K562 (cell line): ENCODE measurements at regions of chr11 and their contacts with region 1.

Region 1: DNA sequence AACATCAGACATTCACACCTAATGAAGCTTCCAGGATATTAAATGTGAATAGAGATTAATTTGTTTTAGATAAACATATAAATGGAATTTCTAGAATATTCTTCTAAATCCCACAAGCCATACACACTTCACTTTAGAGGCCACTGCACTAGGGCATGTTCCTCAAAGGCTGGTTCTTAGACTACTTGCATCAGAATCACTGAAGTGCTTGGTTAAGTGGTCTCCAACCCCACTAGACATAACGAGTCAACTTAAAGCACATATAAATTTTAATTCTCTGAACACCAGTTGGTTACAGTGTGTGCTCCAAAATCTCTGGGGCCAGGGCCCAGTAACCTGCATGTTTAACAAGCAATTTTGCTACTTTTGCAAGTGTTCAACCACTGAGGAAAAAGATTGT is 7.9 kb upstream of the ALKBH8 start:
- DNase-seq: no peak
- ATAC-seq: no peak
- H3K4me3 ChIP-seq: no peak overlapping the region
- H3K27ac ChIP-seq: no peak overlapping the region
- H3K4me1 ChIP-seq: peaks cover 0 to 4% of the 10 kb centered on the region in 2 experiments; a peak in 1 of 5 replicates
- H3K27me3 ChIP-seq: no peaks in the 10 kb centered on the region
- CTCF ChIP-seq: no peak
- EP300 ChIP-seq: no peak
- POLR2A ChIP-seq: no peak
- RAD21 ChIP-seq: no peak

Region 2: DNA sequence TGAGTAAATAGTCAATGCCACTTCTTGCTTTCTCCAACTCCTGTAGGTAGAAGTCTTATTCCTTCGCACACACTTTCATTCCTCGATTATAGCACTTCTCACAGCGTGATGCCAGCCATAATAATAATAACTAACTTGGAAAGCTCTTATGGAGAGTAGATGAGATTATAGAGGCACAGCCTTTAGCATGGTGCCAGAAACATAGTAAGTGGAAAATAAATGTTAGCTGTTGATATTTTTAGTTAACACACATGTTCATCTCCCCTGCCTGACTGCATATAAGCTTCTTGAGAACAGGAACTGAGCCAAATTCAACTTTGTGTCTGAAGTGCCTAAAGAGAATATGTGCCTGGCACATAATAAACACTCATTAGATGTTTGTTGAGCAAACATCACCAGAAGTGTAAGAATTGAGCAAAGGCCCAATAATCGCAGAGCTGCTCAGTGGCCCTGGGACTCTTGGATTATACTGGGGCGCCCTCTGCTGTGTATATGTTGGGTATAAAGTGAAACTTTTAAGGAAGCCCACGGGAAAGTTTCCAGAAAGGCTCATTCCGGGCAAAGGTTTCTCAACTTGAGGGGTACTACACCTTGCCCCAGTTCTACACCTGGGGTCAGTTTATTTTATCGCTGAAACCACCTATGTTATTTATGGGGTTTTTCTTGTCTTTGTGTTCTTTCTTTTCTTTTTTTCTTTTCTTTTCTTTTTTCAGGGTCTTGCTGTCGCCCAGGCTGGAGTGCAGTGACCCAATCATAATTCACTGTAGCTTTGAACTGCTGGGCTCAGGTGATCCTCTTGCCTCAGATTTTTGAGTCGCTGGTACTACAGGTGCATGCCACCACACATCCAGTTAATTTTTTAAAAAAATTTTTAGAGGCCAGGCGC is 116.1 kb after region 1 on chr11:
- CTCF ChIA-PET with region 1: interaction called, 8 read pairs
- POLR2A ChIA-PET with region 1: no interaction called
- in situ Hi-C with region 1: no loop called
- intact Hi-C with region 1: loop called (anchors 1 kb)
- DNase-seq: peak; percentile 33 to 78 (median 46)
- ATAC-seq: peak; percentile 94
- H3K4me3 ChIP-seq: no peak overlapping the region
- H3K27ac ChIP-seq: no peak overlapping the region
- H3K4me1 ChIP-seq: no peaks in the 10 kb centered on the region
- H3K27me3 ChIP-seq: no peaks in the 10 kb centered on the region
- CTCF ChIP-seq: peak; percentile 64 to 86 (median 79)
- EP300 ChIP-seq: no peak
- POLR2A ChIP-seq: no peak
- RAD21 ChIP-seq: peak; percentile 93 to 95

Region 3: GRCh38 chr11:107849790-107850189 is 276.4 kb after region 1 on chr11:
- CTCF ChIA-PET with region 1: no interaction called
- POLR2A ChIA-PET with region 1: no interaction called
- in situ Hi-C with region 1: no loop called
- intact Hi-C with region 1: no loop called
- DNase-seq: no peak
- ATAC-seq: peak; percentile 55
- H3K4me3 ChIP-seq: no peak overlapping the region
- H3K27ac ChIP-seq: no peak overlapping the region
- H3K4me1 ChIP-seq: peaks cover 0 to 6% of the 10 kb centered on the region in 2 experiments; a peak in 3 of 5 replicates
- H3K27me3 ChIP-seq: no peaks in the 10 kb centered on the region
- CTCF ChIP-seq: no peak
- EP300 ChIP-seq: no peak
- POLR2A ChIP-seq: no peak
- RAD21 ChIP-seq: no peak